Mucosa of descending colon (tissue), 3 donors: ENCODE measurements at regions of chr9 and their contacts with region 1.

Region 1: DNA sequence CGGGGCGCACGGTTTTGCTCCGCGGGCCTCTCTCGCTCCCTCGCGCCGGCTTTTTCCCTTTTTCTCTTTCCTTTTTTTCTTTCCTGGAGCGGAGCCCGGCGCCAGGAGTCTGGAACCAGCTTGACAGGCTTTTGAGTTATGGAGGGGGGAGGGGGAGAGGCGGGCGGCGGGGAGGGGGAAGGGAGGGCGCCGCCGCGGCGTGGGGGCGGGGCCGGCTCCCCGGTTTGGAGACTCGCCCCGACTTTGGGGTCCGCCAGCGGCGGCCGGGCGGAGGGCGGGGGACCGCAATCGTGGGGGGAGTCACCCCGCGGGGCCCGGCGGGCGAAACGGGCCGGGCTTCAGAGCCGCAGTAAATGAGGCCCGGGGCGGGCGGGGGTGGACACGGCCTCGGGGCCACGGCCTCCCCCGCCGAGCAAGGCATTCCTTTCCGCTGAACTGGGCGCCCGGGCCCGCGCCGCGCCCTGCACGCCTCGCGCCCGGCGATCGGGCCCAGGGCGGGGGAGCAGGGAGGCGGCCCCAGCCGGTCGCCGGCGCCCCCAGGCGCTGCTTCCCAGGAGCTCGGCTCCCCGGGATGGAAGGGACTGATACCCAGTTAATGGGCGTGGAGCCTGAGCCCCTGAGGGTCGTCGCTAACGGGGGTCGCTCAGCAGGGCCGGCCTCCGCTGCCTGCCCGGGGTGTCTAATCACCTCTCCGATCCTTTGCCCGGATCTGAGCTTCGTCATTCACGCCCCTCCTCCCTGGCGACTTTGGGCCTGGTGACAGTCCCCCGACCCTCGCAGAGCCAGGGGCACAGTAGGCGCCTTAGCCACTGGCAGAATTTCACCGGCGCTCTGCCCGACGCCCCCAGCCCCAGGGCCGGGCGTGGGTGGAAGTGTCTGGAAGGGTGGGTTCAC is 138.1 kb downstream of the C9orf50 start:
- DNase-seq: peak; percentile 81 to 92 (median 88)
- ATAC-seq: peak; percentile 80
- H3K4me3 ChIP-seq: peak overlapping the region; percentile 17
- H3K4me1 ChIP-seq: peaks cover 17% of the 10 kb centered on the region
- CTCF ChIP-seq: no peak

Region 2: DNA sequence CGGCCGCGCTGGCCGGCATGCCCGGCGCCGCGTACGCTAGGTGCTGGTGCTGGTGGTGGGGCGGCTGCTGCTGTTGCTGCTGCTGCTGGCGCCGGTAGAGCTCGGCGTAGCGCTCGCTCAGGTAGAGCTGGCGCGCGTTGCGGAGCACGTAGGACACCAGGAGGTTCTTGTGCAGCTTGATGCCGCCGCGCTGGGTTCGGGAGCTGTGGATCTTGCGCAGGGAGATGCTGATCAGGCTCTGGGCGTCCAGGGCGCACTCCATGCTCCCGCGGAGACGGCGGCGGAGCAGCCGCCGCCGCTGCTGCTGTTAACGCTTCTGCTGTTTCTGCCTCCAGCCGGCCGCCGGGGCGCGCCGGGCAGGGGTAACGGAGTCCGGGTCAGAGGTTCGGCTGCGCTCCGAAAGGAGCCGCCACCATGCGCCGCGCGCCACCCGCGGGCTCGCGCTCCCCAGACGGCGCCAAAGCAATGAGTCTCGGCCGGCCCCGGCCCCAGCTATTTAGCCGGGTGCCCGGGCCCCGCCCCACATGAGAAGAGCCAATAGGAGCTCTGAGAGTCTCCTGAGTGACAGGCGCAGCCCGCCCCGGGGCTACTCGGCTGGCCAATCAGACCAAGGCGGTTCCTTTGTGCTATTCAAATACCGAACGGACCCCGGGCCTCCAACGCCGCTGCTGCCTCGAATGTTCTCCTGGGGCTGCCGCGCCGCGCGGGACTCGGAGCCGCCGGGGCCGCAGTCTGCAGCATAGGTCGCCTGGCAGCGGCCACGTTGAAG is 304.8 kb before region 1 on chr9 and contains the start of gene IER5L:
- intact Hi-C with region 1: loop called in 1 of 2 experiments (anchors 10 kb)
- DNase-seq: peak; percentile 95 to 97 (median 96)
- ATAC-seq: peak; percentile 78
- H3K4me3 ChIP-seq: peak within 1 kb of the TSS; percentile 56
- H3K4me1 ChIP-seq: peaks cover 41% of the 10 kb centered on the region
- CTCF ChIP-seq: no peak
- total RNA-seq, gene IER5L: 5.8 to 8.2 (median 8.0) TPM